ENCODE measurements at regions of chr1 and their contacts with region 1.

Region 1: GRCh38 chr1:1858382-1859086 is 32.4 kb downstream of the GNB1 start:
- DNase-seq: no peak
- CTCF ChIP-seq: no peak

Region 2: DNA sequence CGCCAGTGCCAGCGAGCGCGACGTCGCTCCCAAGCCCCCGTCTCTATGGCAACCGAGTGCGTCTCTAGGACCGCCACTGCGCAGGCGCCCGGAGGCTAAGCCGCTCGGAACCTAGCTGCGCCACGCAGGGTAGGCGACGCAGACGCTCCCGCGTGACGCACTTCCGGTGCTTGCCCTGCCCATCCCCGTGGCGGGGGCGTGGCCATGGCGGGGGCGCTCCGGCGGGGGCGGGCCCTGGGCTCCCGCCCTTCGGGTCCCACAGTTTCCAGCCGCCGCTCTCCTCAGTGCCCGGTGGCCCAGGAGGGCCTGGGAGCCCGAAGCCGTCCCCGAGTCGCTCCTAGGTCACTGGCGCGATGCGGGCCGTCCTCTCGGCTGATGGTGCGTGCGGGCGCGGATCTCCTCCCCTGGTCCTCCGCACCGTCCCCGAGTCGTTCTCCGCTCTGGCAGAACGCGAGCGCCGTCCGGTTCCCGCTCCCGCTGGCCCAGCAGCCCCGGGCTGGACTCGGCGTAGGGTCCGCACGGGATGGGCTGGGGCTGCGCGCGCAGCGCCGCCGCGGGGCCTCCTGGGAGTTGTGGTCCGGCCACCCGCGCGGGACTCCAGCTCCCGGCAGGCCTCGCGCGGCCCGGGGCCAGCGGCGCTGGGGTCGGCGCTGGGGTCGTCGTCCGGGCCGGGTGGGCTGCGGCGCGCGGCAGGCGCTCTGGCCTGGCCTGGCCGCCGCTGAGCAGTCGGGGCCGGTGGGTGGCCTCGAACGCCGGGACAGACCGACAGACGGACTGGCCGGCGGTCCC is 243.1 kb before region 1 on chr1 and contains the start of gene MIB2:
- in situ Hi-C with region 1: no loop called
- DNase-seq: peak; percentile 100
- CTCF ChIP-seq: no peak

Region 3: GRCh38 chr1:1796466-1796865 is 62.1 kb before region 1 on chr1:
- in situ Hi-C with region 1: loop called (anchors 10 kb)
- DNase-seq: no peak
- CTCF ChIP-seq: peak; percentile 35

Measured in GM13977 (cell line).